GM23248 (cell line): ENCODE measurements at regions of chr3 and their contacts with region 1.

Region 1: DNA sequence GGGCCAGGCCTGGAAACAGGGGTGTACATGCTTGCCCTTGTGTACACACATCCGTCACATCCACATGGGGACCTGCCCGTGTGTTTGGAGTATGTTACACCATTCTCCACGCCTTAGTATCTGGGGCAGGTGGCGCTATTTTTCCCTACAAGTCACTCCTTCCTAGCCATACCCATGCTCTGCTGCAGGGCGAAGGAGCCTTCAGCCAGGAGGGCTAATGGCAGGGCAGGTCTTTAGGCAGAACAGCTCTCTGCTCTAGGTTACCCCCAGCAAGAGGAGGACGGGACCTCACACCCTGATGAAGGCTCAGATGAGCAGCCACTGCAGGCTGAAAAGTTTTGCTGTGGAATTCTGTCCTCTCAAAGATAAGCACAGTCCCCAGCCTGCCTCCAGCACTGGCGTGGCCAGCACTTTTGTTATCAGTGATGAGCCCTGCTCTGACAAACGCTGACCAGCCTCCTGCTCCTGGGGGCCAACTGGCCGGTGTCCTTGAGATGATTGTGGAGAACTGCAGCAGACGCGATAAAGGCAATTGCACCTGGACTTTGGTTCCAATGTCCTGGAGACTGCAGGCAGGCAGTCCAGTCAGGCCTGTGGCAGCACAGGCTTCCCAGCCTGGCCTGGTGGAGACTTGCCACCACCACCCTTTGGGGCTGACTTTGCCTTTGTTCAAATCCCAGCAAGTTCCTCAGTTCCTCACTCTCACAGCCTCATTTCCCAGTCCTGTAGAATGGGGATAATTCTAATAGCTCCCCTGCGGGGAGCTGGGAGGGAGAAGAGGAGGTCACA is 19.8 kb upstream of the PIGZ start:
- DNase-seq: no peak
- H3K4me3 ChIP-seq: no peak overlapping the region
- H3K27ac ChIP-seq: no peak overlapping the region
- H3K4me1 ChIP-seq: peaks cover 4% of the 10 kb centered on the region; the same call in 1 of the 2 replicates
- H3K27me3 ChIP-seq: 0 out of 2 replicates have a peak, but pooled peaks cover 4% of the 10 kb centered on the region

Region 2: DNA sequence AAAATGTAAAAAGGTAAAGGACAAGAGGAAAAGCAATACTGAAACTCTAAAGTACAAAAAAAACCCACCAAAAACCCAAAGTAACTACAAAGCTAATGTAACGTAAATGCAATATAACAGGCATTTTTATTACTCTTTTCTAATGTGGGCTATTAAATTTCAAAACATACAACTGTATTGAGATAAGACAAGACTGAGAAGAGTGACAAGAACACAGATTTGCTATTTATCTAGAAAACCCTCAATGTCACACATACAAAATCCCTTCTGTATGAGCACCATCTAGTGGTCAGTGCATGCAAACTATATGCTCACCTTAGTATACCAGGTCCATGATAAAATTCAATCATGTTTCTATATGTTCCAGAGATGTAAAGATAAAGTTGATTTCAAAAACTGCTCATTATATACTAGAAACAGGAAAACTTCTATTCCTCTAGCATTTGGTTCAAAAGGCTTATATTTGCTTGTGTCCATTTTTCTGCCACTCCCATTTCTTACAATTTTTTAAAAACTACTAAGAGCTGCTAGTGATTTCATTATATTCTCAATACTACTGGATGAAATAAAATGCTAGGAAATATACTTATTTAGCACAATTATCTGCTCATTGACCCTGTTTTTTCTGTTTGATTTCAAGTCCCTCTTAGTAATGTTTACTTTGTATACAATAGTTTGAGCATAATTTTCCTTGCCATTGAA is 198.6 kb after region 1 on chr3:
- in situ Hi-C with region 1: loop called (anchors 25 kb)
- DNase-seq: peak; percentile 73
- H3K4me3 ChIP-seq: no peak overlapping the region
- H3K27ac ChIP-seq: no peak overlapping the region
- H3K4me1 ChIP-seq: peaks cover 6% of the 10 kb centered on the region; the same call in 1 of the 2 replicates
- H3K27me3 ChIP-seq: no peaks in the 10 kb centered on the region